B cell (primary cell): ENCODE measurements at regions of chr15 and their contacts with region 1.

Region 1: DNA sequence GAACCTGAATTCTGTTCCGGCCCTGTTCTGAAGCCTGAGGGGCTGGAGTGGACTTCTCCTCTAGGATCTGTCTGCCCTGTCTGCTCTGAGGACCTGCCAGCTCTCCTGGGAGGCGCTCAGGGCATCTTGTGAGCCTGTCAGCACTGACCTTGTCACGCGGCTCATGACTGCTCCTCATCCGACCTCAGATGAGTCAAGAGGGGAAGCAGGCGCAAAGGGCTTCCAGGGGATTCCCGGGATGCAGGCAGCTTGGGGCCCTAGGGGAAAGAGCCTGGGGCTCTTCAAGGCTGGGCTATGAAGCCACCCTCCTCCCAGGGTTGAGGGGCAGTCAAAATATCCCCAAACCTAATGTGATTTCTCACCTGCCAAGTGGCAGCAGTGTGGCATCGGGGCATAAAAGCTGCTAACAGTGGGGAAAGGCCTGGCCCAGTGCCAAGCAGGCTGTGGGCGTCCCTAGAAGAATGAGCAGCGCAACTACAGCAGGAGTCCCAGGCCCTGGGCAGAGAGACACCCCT is 27.6 kb upstream of the ANKDD1A start:
- DNase-seq: peak; percentile 67
- ATAC-seq: peak; percentile 66
- H3K4me3 ChIP-seq: no peak overlapping the region
- H3K4me3 Mint-ChIP-seq: peak overlapping the region; percentile 65
- H3K27ac ChIP-seq: peak overlapping the region; percentile 33 to 54
- H3K27ac Mint-ChIP-seq: peak overlapping the region; percentile 75
- H3K4me1 ChIP-seq: peaks cover 27 to 35% of the 10 kb centered on the region in 2 donors
- H3K4me1 Mint-ChIP-seq: peaks cover 27% of the 10 kb centered on the region
- H3K27me3 ChIP-seq: no peaks in the 10 kb centered on the region
- H3K27me3 Mint-ChIP-seq: no peaks in the 10 kb centered on the region
- CTCF ChIP-seq: no peak

Region 2: GRCh38 chr15:64344651-64345294 is 539.3 kb before region 1 on chr15:
- CTCF ChIA-PET with region 1: no interaction called
- POLR2A ChIA-PET with region 1: no interaction called
- intact Hi-C with region 1: no loop called
- DNase-seq: no peak
- ATAC-seq: no peak
- H3K4me3 ChIP-seq: no peak overlapping the region
- H3K4me3 Mint-ChIP-seq: no peak overlapping the region
- H3K27ac ChIP-seq: no peak overlapping the region
- H3K27ac Mint-ChIP-seq: no peak overlapping the region
- H3K4me1 ChIP-seq: no peaks in the 10 kb centered on the region
- H3K4me1 Mint-ChIP-seq: peaks cover 10% of the 10 kb centered on the region
- H3K27me3 ChIP-seq: no peaks in the 10 kb centered on the region
- H3K27me3 Mint-ChIP-seq: no peaks in the 10 kb centered on the region
- CTCF ChIP-seq: no peak

Region 3: GRCh38 chr15:64836023-64836536 is 48.0 kb before region 1 on chr15:
- CTCF ChIA-PET with region 1: interaction called, 16 read pairs
- POLR2A ChIA-PET with region 1: no interaction called
- intact Hi-C with region 1: no loop called
- DNase-seq: no peak
- ATAC-seq: no peak
- H3K4me3 ChIP-seq: no peak overlapping the region
- H3K4me3 Mint-ChIP-seq: peak overlapping the region; percentile 71
- H3K27ac ChIP-seq: no peak overlapping the region
- H3K27ac Mint-ChIP-seq: peak overlapping the region; percentile 69
- H3K4me1 ChIP-seq: peaks cover 10 to 18% of the 10 kb centered on the region in 2 donors
- H3K4me1 Mint-ChIP-seq: peaks cover 27% of the 10 kb centered on the region
- H3K27me3 ChIP-seq: no peaks in the 10 kb centered on the region
- H3K27me3 Mint-ChIP-seq: no peaks in the 10 kb centered on the region
- CTCF ChIP-seq: peak; percentile 62

Region 4: GRCh38 chr15:64905119-64905831 is 21.2 kb after region 1 on chr15:
- CTCF ChIA-PET with region 1: interaction called, 16 read pairs
- POLR2A ChIA-PET with region 1: no interaction called
- intact Hi-C with region 1: no loop called
- DNase-seq: peak; percentile 85
- ATAC-seq: peak; percentile 95
- H3K4me3 ChIP-seq: peak overlapping the region; percentile 19 to 61 (median 44)
- H3K4me3 Mint-ChIP-seq: peak overlapping the region; percentile 84
- H3K27ac ChIP-seq: no peak overlapping the region
- H3K27ac Mint-ChIP-seq: peak overlapping the region; percentile 77
- H3K4me1 ChIP-seq: peaks cover 21 to 24% of the 10 kb centered on the region in 2 donors
- H3K4me1 Mint-ChIP-seq: peaks cover 36% of the 10 kb centered on the region
- H3K27me3 ChIP-seq: peaks cover 0 to 7% (median 0%) of the 10 kb centered on the region in 4 experiments
- H3K27me3 Mint-ChIP-seq: peaks cover 4% of the 10 kb centered on the region
- CTCF ChIP-seq: peak; percentile 86

Region 5: DNA sequence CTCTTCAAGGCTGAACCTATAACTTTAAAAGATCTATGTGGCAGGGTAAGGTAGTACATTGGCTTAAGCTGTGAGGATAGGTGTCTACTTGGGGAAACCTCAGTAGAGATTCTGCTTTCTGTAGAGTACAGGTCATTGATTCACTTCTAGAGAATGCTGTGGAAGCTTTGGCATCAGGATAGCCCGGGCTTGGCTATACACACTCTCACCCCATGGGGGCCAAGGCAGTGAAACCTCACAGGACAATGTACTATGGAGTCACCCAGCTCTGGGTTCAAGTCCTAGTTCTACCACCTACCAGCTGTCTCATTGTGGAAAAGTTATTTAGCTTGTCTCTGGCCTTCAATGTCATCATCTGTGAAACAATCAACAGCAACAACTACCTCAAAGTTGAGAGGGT is 136.4 kb after region 1 on chr15:
- CTCF ChIA-PET with region 1: no interaction called
- POLR2A ChIA-PET with region 1: no interaction called
- intact Hi-C with region 1: no loop called
- DNase-seq: no peak
- ATAC-seq: no peak
- H3K4me3 ChIP-seq: no peak overlapping the region
- H3K4me3 Mint-ChIP-seq: no peak overlapping the region
- H3K27ac ChIP-seq: no peak overlapping the region
- H3K27ac Mint-ChIP-seq: no peak overlapping the region
- H3K4me1 ChIP-seq: no peaks in the 10 kb centered on the region
- H3K4me1 Mint-ChIP-seq: no peaks in the 10 kb centered on the region
- H3K27me3 ChIP-seq: no peaks in the 10 kb centered on the region
- H3K27me3 Mint-ChIP-seq: no peaks in the 10 kb centered on the region
- CTCF ChIP-seq: no peak

Region 6: DNA sequence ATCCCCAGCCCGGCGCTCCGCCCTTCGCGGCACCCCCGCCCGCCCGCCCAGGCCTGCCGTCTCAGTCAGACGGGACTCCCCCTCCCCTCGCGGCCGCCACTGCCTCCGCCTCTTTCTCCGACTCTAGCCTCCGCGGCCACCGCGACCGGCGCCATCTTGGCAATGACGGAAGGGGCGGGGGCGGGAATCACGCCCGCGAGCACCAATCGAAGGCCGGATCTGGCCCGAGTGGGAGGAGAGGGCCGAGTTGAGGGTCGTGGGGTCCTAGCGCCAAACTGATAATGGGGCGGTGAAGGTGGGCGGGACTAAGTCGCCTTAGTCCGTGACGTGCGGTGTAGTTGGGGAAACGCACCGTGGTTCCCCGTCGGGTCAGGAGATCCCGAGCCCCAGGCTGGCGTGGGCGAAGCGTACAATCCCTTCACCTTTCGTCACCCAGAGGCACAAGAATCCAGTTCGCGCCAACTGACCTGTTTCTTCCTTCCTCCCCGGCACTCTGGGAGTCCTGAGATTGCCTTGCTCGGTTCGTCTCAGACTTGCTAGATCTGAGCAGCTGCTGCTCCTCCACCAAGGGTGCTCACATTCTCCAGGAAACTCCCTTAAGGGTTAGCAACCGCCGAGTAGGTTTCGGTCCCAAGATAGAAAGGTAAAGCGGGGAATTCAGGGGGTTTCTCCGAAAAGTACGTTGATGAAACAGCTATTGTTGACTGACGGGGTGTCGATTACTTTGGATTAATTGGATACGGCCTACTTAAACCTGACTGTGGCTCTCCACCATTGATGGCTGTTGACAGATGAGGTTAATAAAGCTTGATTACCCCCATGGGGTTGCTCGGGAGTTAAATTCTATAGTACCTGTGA is 908.3 kb after region 1 on chr15 and contains the start of gene DENND4A:
- CTCF ChIA-PET with region 1: no interaction called
- POLR2A ChIA-PET with region 1: no interaction called
- intact Hi-C with region 1: no loop called
- DNase-seq: peak; percentile 100
- ATAC-seq: peak; percentile 83
- H3K4me3 ChIP-seq: peak within 1 kb of the TSS; percentile 82 to 99 (median 95)
- H3K4me3 Mint-ChIP-seq: peak within 1 kb of the TSS; percentile 93
- H3K27ac ChIP-seq: peak within 1 kb of the TSS; percentile 99 to 100
- H3K27ac Mint-ChIP-seq: peak within 1 kb of the TSS; percentile 97
- H3K4me1 ChIP-seq: peaks cover 33 to 44% of the 10 kb centered on the region in 2 donors
- H3K4me1 Mint-ChIP-seq: peaks cover 50% of the 10 kb centered on the region
- H3K27me3 ChIP-seq: no peaks in the 10 kb centered on the region
- H3K27me3 Mint-ChIP-seq: no peaks in the 10 kb centered on the region
- CTCF ChIP-seq: no peak
- total RNA-seq, gene DENND4A: 103 and 114 TPM in 2 replicates